AG04449 (cell line): ENCODE measurements at regions of chr12 and their contacts with region 1.

Region 1: DNA sequence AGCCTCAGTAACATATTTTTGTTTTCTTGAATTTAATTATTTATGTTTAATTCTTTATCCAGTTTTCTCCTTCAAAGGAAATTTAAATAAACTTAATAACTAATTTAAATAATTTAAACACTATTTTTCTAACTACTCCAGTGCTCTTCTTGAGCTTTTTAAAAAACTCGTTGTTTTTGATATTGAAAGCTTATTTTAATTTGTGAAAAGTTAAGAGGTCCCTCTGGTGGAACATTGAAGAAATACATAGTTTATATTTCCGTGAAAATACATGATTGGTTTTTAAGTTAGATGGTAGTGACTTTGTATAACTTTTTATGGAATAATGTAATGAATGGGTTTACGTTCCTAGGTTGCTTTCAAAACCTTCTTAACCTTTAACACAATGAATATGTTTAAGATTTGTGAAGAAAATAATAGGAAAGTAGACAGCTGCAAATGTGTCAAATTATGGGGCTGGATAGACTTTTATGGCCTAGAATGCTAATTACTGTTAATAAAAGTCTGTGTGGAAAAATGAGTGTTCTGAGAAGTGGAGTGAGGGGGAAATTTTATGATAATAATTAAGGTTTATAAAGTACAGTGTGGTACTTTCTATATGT is 45.9 kb upstream of the MSRB3 start:
- DNase-seq: no peak
- H3K4me3 ChIP-seq: no peak overlapping the region
- CTCF ChIP-seq: no peak

Region 2: GRCh38 chr12:65217086-65217485 is 15.5 kb before region 1 on chr12:
- CTCF ChIA-PET with region 1: interaction called, 15 read pairs
- POLR2A ChIA-PET with region 1: no interaction called
- DNase-seq: no peak
- H3K4me3 ChIP-seq: no peak overlapping the region
- CTCF ChIP-seq: no peak